Aorta (tissue), 5 donors: ENCODE measurements at regions of chr5 and their contacts with region 1.

Region 1: DNA sequence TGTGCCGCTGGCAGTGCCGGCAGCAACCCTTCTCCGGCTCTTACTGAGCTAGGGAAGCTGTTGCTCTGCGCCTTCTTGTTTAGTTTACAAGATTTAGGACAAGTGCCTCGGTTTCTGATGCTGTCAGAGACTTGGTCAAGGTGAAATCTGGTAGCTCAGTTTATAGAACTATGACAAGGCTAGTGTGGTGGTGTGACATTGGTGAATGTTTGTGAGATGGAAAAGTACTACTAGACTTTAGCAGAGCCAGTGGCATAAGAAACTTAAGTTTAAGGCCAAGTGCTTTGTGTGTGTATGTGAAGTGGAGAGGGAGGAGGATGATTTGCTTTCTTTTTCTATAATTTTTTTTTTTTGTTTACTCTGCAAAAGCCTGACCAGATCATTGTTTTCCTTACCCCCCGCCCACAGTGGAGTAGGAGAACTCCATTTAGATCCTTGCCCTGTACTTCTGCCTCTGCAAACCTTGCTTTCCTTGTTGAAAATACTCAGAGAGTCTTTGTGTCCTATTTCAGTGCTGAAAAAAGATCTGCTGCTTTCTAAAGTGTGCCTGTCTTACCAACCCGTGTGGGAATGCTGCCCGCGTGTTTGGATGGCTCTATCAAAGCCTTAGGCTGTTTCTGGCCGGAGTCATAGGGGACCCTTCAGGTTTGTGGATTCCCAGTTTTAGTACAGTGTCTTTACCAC is 75.9 kb downstream of the TRIO start:
- DNase-seq: no peak
- ATAC-seq: peak; percentile 19
- H3K4me3 ChIP-seq: no peak overlapping the region
- H3K27ac ChIP-seq: peak overlapping the region; percentile 49 to 78
- H3K4me1 ChIP-seq: peaks cover 9 to 12% of the 10 kb centered on the region in 2 donors
- H3K27me3 ChIP-seq: no peaks in the 10 kb centered on the region

Region 2: GRCh38 chr5:13976867-13977830 is 241.9 kb before region 1 on chr5:
- intact Hi-C with region 1: no loop called
- DNase-seq: no peak
- ATAC-seq: no peak
- H3K4me3 ChIP-seq: no peak overlapping the region
- H3K27ac ChIP-seq: no peak overlapping the region
- H3K4me1 ChIP-seq: no peaks in the 10 kb centered on the region
- H3K27me3 ChIP-seq: no peaks in the 10 kb centered on the region

Region 3: DNA sequence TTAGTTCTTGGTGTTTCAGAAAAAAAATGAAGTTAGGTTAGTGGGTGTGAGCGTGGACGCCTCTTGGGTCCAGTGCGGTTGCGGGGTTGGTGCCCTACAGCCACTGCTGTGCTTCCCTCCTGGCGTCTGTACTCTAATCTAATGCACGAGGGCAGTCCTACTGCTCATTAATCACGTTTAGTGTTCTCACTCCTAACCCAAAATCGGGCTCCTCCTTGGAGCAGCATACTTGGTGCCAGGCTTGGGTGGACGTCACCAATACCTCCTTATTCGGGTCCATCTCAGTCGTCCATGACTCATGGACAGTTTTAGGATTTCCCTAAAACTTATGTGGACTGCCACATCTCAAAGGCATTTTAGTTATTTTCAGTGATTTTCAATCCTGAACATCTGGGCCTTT is 34.3 kb before region 1 on chr5:
- intact Hi-C with region 1: loop called in 1 of 2 experiments (anchors 5 kb)
- DNase-seq: peak in 1 of 2 donors; percentile 69
- ATAC-seq: peak; percentile 53
- H3K4me3 ChIP-seq: no peak overlapping the region
- H3K27ac ChIP-seq: peak overlapping the region; percentile 96 to 100
- H3K4me1 ChIP-seq: peaks cover 5 to 14% of the 10 kb centered on the region in 2 donors
- H3K27me3 ChIP-seq: no peaks in the 10 kb centered on the region

Region 4: GRCh38 chr5:14234219-14234618 is 15.2 kb after region 1 on chr5:
- intact Hi-C with region 1: no loop called
- DNase-seq: no peak
- ATAC-seq: no peak
- H3K4me3 ChIP-seq: no peak overlapping the region
- H3K27ac ChIP-seq: no peak overlapping the region
- H3K4me1 ChIP-seq: peaks cover 0 to 4% of the 10 kb centered on the region in 2 donors
- H3K27me3 ChIP-seq: no peaks in the 10 kb centered on the region

Region 5: GRCh38 chr5:14250084-14250695 is 31.2 kb after region 1 on chr5:
- intact Hi-C with region 1: loop called in 1 of 2 experiments (anchors 5 kb)
- DNase-seq: peak; percentile 60 to 85
- ATAC-seq: peak; percentile 67
- H3K4me3 ChIP-seq: no peak overlapping the region
- H3K27ac ChIP-seq: no peak overlapping the region
- H3K4me1 ChIP-seq: peaks cover 4 to 6% of the 10 kb centered on the region in 2 donors
- H3K27me3 ChIP-seq: no peaks in the 10 kb centered on the region

Region 6: GRCh38 chr5:14286574-14287421 is 67.8 kb after region 1 on chr5:
- intact Hi-C with region 1: no loop called
- DNase-seq: no peak
- ATAC-seq: no peak
- H3K4me3 ChIP-seq: no peak overlapping the region
- H3K27ac ChIP-seq: no peak overlapping the region
- H3K4me1 ChIP-seq: peaks cover 3 to 4% of the 10 kb centered on the region in 2 donors
- H3K27me3 ChIP-seq: no peaks in the 10 kb centered on the region

Region 7: DNA sequence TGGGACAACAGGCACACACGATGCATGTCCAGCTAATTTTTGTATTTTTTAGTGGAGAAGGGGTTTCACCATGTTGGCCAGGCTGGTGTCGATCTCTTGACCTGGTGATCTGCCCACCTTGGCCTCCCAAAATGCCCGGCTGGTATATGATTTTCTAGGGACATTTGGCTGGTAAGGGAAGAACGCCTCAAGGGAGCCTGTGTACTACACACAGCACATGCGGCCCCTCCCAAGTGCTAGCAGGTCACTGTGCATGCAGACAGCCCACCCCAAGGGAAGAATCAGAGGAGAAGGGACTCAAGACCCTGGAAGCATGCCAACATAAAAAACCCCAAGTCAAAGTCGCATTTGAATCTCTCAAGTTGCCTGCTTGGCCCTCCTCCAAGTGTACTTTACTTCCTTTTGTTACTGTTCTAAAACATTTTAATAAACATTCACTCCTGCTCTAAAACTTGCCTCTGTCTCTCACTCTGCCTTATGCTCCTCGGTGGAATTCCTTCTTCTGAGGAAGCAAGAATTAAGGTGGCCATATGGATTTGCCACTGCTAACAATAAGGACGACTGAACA is 338.2 kb after region 1 on chr5:
- intact Hi-C with region 1: no loop called
- DNase-seq: no peak
- ATAC-seq: no peak
- H3K4me3 ChIP-seq: no peak overlapping the region
- H3K27ac ChIP-seq: no peak overlapping the region
- H3K4me1 ChIP-seq: no peaks in the 10 kb centered on the region
- H3K27me3 ChIP-seq: no peaks in the 10 kb centered on the region